ENCODE measurements at regions of chr2 and their contacts with region 1.

Region 1: DNA sequence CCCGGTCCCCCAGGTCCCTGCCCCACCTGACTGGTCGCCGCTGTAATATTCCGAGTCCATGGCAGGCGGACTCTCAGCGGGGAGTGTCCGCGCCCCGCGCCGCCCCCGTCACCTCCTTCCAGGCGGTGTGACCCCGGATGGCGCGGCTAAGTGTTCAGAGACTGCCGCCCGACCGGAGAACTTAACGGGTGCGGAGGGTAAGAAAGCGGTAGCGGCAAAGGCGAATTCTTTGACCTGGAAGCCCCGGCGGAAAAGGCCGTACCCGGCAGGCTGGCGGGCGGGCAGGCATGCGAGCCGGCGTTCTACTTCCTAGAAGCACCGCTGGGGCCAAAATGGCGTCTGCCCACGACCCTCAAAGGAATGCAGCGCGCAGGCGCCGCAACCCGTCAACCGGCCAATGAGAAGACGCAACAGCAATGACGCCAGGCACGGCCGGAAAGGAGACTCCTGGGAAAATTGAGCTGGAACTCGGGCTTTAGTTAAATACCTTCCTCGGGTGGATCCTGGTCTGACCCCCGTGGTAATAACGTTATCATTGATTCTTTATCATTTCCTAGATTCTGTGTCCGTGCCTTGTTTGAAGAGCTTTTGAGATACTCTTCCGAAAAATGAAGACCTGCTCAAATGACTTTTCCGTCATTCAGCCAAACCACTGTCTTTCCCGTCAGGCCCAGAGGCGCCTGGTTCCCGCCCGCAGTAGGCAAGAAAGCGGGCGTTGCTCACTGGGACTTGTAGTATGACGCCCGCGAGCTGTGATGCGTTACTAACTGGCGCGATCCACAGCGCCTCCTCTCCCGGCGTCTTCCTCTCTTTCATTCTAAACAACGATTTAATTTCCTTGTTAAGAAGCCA is at the start of gene IWS1:
- DNase-seq: peak; percentile 98
- H3K4me3 ChIP-seq: peak within 1 kb of the TSS; percentile 78 to 92 (median 88)
- H3K27ac ChIP-seq: peak within 1 kb of the TSS; percentile 100
- H3K4me1 ChIP-seq: peaks cover 11% of the 10 kb centered on the region
- H3K27me3 ChIP-seq: no peaks in the 10 kb centered on the region
- CTCF ChIP-seq: peak in 1 of 2 donors; percentile 14
- POLR2A ChIP-seq: peak; percentile 88
- total RNA-seq, gene IWS1: 44.9 and 51.0 TPM in 2 replicates

Region 2: DNA sequence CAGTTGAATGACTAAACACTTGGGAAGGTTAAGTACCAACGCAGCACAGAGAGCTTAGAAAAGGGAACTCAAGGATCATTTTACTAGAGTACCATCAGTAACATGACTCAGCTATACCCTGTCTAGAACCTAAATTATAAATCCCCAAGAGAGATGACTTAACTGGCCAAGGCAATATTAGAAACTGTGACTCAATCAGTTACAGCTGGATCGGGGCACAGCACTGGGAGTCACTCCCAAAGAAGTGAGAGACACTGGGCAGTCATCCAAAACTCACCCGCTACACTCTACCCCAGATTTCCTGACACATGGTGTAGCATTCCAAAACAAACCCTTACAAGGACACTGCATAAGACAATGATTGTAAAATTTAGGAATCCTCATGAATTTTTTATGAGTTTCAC is 17.7 kb before region 1 on chr2:
- CTCF ChIA-PET with region 1: interaction called, 8 read pairs
- POLR2A ChIA-PET with region 1: interaction called, 4 read pairs
- dilution Hi-C with region 1: no loop called
- intact Hi-C with region 1: loop called (anchors 1 kb)
- DNase-seq: peak; percentile 93
- H3K4me3 ChIP-seq: no peak overlapping the region
- H3K27ac ChIP-seq: peak overlapping the region; percentile 54
- H3K4me1 ChIP-seq: peaks cover 36% of the 10 kb centered on the region
- H3K27me3 ChIP-seq: no peaks in the 10 kb centered on the region
- CTCF ChIP-seq: no peak
- POLR2A ChIP-seq: no peak

Region 3: GRCh38 chr2:127701193-127701650 is 174.8 kb after region 1 on chr2 and contains the start of gene SFT2D3:
- CTCF ChIA-PET with region 1: interaction called, 5 read pairs
- POLR2A ChIA-PET with region 1: no interaction called
- dilution Hi-C with region 1: no loop called
- intact Hi-C with region 1: loop called (anchors 1 kb)
- DNase-seq: peak; percentile 91
- H3K4me3 ChIP-seq: peak within 1 kb of the TSS; percentile 40 to 79 (median 45)
- H3K27ac ChIP-seq: peak within 1 kb of the TSS; percentile 85
- H3K4me1 ChIP-seq: peaks cover 17% of the 10 kb centered on the region
- H3K27me3 ChIP-seq: no peaks in the 10 kb centered on the region
- CTCF ChIP-seq: no peak
- POLR2A ChIP-seq: peak; percentile 99
- total RNA-seq, gene SFT2D3: 4.4 and 4.7 TPM in 2 replicates

Region 4: DNA sequence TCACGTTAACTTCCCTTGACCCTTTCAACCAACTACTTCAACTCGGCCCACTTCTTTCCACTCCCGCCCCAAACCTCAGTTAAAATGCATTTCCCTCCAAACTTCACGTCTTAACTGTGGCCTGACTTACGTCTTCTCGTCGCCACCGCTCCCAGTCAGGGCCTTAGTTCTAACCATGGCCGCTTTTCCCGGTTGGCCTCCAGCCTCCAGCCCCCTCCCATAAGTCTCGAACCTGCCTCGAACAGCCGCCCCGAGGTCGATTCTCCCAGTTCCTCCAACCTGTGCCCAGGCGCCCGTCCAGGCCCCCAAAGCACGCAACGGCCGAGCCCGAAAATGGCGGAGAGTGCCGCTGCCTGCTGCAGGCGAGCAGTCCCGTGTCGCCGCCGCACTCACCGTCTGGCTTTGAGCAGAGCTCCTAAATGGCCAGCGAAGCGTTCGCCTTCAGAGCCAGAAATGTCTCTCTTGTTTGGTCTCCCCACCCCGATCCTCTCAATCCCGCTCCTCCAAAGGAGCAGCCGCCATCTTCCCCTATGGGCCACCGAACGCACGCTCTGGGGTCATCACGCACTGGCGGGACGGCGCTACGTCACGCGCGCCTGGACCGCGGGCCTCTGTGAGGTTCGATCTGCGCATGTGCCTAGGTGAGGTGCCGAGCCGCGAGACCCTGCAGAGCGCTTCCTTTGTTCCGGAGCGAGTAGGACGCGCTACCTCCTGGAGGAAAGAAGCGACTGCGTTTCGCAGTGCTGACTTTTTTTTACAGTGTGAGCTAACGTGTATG is 284.4 kb after region 1 on chr2 and contains the start of gene WDR33:
- CTCF ChIA-PET with region 1: no interaction called
- POLR2A ChIA-PET with region 1: no interaction called
- dilution Hi-C with region 1: no loop called
- intact Hi-C with region 1: loop called (anchors 2 kb)
- DNase-seq: peak; percentile 91
- H3K4me3 ChIP-seq: peak within 1 kb of the TSS; percentile 50 to 100 (median 97)
- H3K27ac ChIP-seq: peak within 1 kb of the TSS; percentile 83
- H3K4me1 ChIP-seq: peaks cover 10% of the 10 kb centered on the region
- H3K27me3 ChIP-seq: no peaks in the 10 kb centered on the region
- CTCF ChIP-seq: no peak
- POLR2A ChIP-seq: peak; percentile 86
- total RNA-seq, gene WDR33: 52.5 and 54.7 TPM in 2 replicates